HepG2 (cell line): ENCODE measurements at regions of chr13 and their contacts with region 1.

Region 1: DNA sequence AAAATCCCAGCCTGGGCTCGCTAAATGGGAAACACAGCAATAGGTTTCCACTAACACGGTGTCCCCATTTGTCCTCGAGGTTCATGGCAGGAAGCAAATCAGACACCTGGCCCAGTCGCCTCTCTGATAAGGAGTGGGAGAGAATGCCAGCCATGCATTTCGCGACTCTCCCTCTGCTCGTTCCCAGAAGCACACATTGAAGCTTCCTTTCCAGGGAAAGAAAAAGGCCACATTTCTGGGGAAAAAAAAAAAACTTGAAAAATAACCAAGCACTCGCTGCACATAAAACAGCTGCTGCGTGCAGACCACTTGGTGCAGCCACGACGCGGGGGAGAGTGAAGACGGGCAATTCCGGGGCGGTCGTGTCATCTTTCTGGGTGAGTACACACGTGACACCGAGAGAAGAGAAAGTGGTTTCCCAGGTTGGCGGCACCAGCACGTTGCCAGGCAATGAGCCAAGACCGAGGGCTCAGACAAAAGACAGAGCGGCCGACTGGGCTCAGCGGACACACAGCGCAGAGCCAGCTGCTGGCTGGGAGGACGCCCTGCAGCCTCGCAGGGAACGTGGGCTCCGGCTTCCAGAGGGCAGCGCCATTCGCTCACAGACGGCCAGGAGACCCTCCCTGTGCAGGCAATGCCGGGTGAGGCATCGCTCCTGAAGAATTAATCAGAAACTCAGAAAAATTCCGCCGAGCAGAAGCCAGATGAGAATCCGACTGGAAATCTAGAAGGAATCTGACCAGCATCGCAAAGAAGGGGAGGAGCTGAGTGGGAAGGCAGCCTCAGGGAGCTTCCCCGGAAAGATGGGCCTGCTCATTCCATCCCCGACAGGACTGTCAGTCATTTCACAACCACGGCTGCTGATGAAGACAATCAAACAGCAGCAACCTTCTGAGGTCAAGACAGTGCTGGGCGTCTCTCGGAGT is 83.2 kb upstream of the IRS2 start:
- DNase-seq: no peak
- ATAC-seq: no peak
- H3K4me3 ChIP-seq: no peak overlapping the region
- H3K27ac ChIP-seq: no peak overlapping the region
- H3K4me1 ChIP-seq: no peaks in the 10 kb centered on the region
- H3K27me3 ChIP-seq: no peaks in the 10 kb centered on the region
- CTCF ChIP-seq: no peak
- EP300 ChIP-seq: no peak
- POLR2A ChIP-seq: no peak
- RAD21 ChIP-seq: no peak

Region 2: DNA sequence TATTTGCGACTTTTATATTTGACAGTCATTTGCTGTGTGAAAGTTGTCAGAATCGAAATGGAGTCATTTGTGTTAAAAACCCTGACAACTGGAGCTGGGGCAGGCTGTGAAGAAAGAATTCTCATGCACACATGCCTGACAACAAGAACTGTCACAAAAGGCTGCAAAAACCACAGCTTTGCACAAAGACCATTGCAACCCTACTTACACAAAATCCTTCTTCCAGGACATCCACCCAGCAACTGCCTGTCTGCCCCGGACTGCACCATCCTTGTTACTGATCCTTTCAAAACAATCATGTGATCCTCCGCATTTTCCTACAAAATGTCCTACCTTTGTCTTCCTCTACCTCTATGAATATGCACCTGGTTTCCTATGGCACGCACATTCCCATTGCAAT is 16.4 kb before region 1 on chr13:
- CTCF ChIA-PET with region 1: no interaction called
- POLR2A ChIA-PET with region 1: no interaction called
- in situ Hi-C with region 1: no loop called
- intact Hi-C with region 1: loop called (anchors 1 kb)
- DNase-seq: no peak
- ATAC-seq: no peak
- H3K4me3 ChIP-seq: no peak overlapping the region
- H3K27ac ChIP-seq: no peak overlapping the region
- H3K4me1 ChIP-seq: no peaks in the 10 kb centered on the region
- H3K27me3 ChIP-seq: no peaks in the 10 kb centered on the region
- CTCF ChIP-seq: no peak
- EP300 ChIP-seq: no peak
- POLR2A ChIP-seq: no peak
- RAD21 ChIP-seq: no peak